Activated CD4-positive, alpha-beta memory T cell treated with anti-CD3 and anti-CD28 coated beads for 36 hours (primary cell): ENCODE measurements at regions of chr17 and their contacts with region 1.

Region 1: GRCh38 chr17:58587702-58588254 is 73.3 kb upstream of the MTMR4 start:
- DNase-seq: peak; percentile 79
- H3K4me3 Mint-ChIP-seq: no peak overlapping the region
- H3K27ac Mint-ChIP-seq: no peak overlapping the region
- H3K4me1 Mint-ChIP-seq: no peaks in the 10 kb centered on the region
- H3K27me3 Mint-ChIP-seq: no peaks in the 10 kb centered on the region

Region 2: DNA sequence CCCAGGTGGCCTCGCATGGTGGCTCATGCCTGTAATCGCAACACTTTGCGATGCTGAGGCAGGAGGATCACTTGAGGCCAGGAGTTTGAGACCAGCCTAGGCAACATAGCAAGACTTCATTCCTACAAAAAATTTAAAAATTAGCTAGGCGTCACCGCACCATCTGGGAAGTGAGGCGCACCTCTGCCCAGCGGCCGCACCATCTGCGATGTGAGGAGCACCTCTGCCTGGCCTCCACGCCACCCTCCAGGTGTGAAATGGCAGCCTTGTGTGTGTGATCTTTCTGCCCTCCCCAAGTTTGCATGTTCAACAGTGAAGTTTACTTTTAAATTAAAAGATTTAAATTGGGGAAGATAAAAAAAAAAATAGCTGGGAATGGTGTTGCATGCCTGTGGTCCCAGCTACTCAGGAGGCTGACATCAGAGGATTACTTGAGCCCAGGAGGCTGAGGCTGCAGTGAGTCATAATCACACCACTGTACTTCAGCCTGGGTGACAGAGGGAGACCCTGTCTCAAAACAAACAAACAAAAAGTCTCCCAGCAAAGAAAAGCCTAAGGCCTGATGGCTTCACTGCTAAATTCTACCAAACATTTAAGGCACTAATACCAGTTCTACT is 135.1 kb before region 1 on chr17:
- CTCF ChIA-PET with region 1: no interaction called
- POLR2A ChIA-PET with region 1: no interaction called
- intact Hi-C with region 1: no loop called
- DNase-seq: no peak
- H3K4me3 Mint-ChIP-seq: no peak overlapping the region
- H3K27ac Mint-ChIP-seq: no peak overlapping the region
- H3K4me1 Mint-ChIP-seq: no peaks in the 10 kb centered on the region
- H3K27me3 Mint-ChIP-seq: no peaks in the 10 kb centered on the region

Region 3: DNA sequence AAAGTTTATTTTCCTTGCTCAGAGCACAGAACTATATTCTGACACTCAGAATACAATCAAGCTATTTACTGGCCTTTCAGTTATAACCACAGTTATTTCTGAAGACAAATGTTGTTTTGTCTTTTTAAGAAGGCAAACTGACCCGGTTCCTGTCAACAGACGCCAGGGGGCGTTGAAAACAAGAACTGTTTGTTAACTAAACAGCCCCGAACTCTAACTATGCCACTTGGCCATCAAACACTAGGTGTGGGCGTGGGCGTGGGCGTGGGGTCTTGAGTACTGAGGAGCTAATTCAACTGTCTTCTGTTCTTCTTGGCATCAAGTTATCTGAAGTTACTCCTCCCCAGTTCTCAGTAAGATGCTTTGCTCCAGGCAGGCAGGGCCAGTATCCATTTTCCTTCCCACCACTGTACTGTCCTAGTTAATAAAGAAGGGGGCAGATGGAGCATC is 10.1 kb before region 1 on chr17:
- CTCF ChIA-PET with region 1: interaction called, 43 read pairs
- POLR2A ChIA-PET with region 1: no interaction called
- intact Hi-C with region 1: no loop called
- DNase-seq: peak; percentile 55
- H3K4me3 Mint-ChIP-seq: no peak overlapping the region
- H3K27ac Mint-ChIP-seq: no peak overlapping the region
- H3K4me1 Mint-ChIP-seq: no peaks in the 10 kb centered on the region
- H3K27me3 Mint-ChIP-seq: no peaks in the 10 kb centered on the region